ENCODE measurements at regions of chr9 and their contacts with region 1.

Region 1: DNA sequence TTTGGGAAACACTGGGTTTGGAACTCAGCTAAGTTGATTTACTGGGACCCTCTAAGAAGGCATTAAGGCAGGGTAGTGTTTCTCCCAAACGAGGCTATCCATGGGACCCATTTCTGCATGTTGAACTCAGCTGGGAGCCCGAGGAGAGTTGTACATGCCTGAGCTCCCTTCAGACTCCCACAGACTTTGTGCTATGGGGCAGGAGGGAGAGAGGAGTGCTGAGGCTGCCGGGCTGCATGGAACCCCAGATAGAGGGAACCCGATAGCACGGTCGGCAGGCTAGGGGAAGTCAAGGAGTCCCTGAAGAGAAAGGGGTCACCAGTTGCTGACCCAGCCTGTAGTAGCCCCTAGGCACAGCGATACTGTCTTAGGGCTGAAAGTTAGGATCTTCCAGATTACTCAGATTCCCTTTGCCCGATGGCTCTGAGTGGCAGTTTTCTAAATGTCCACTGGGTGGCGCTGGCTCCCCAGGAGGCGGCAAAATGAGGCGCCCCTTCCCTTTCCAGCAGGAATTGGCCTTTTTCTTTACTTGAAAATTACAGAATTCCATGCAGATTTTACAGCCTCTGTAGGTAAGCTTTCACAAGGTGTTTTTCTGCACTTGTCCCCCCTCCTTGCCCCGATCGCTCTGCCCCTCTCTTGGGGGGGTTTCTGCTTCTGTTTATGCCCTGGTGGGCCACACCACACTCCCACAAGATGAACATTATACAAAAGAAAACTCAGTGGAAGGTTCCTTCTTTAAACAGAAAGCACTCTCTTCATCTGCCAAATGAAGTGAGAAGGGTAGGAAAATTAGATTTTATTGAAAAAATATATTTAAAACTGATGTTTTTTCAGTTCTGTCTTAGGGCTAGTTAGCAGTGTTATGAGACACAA is 17.8 kb downstream of the NANS start:
- DNase-seq: peak; percentile 49 to 79
- H3K4me3 ChIP-seq: no peak overlapping the region
- H3K27ac ChIP-seq: peak overlapping the region; percentile 69
- H3K4me1 ChIP-seq: peaks cover 49% of the 10 kb centered on the region
- H3K27me3 ChIP-seq: no peaks in the 10 kb centered on the region
- CTCF ChIP-seq: peak; percentile 96

Region 2: GRCh38 chr9:97845130-97845529 is 229.2 kb before region 1 on chr9:
- CTCF ChIA-PET with region 1: no interaction called
- POLR2A ChIA-PET with region 1: no interaction called
- intact Hi-C with region 1: no loop called
- DNase-seq: no peak
- H3K4me3 ChIP-seq: no peak overlapping the region
- H3K27ac ChIP-seq: no peak overlapping the region
- H3K4me1 ChIP-seq: no peaks in the 10 kb centered on the region
- H3K27me3 ChIP-seq: no peaks in the 10 kb centered on the region
- CTCF ChIP-seq: no peak

Region 3: GRCh38 chr9:98056269-98057137 is 17.9 kb before region 1 on chr9 and contains the start of gene NANS:
- CTCF ChIA-PET with region 1: interaction called, 3 read pairs
- POLR2A ChIA-PET with region 1: interaction called, 18 read pairs
- intact Hi-C with region 1: no loop called
- DNase-seq: peak; percentile 91 to 96
- H3K4me3 ChIP-seq: peak within 1 kb of the TSS; percentile 66
- H3K27ac ChIP-seq: peak within 1 kb of the TSS; percentile 67
- H3K4me1 ChIP-seq: peaks cover 21% of the 10 kb centered on the region
- H3K27me3 ChIP-seq: no peaks in the 10 kb centered on the region
- CTCF ChIP-seq: no peak
- total RNA-seq, gene NANS: 74.6 and 84.9 TPM in 2 replicates

Region 4: DNA sequence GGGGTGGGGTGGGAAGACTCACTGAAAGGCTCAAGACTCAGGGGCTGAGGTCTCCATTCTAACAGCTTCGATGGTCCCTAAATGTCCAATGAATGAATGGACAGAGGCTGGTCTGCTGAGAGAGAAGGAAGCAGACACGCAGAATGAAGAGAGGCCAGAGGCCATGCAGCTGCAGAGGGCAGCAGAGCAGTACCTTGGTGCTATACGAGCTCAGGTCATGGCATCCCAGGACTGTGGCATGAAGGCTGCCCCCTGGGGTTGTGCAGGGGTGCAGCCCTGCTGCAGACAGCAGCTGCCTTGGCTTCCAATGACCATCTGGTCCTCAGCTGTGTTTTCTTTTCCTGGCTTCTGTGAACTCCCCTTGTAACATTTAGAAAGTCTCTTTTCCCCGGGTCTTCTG is 133.3 kb after region 1 on chr9:
- CTCF ChIA-PET with region 1: no interaction called
- POLR2A ChIA-PET with region 1: no interaction called
- intact Hi-C with region 1: loop called (anchors 1 kb)
- DNase-seq: no peak
- H3K4me3 ChIP-seq: no peak overlapping the region
- H3K27ac ChIP-seq: no peak overlapping the region
- H3K4me1 ChIP-seq: no peaks in the 10 kb centered on the region; the same call in 1 of the 2 replicates
- H3K27me3 ChIP-seq: no peaks in the 10 kb centered on the region
- CTCF ChIP-seq: no peak

Region 5: GRCh38 chr9:98707166-98708102 is 633.1 kb after region 1 on chr9:
- CTCF ChIA-PET with region 1: no interaction called
- POLR2A ChIA-PET with region 1: no interaction called
- intact Hi-C with region 1: loop called (anchors 10 kb)
- DNase-seq: peak; percentile 69 to 81
- H3K4me3 ChIP-seq: peak overlapping the region; percentile 60
- H3K27ac ChIP-seq: peak overlapping the region; percentile 46; the same call in 1 of the 2 replicates
- H3K4me1 ChIP-seq: peaks cover 6% of the 10 kb centered on the region
- H3K27me3 ChIP-seq: peaks cover 22% of the 10 kb centered on the region
- CTCF ChIP-seq: peak; percentile 70

Region 6: GRCh38 chr9:98899408-98900056 is 825.2 kb after region 1 on chr9:
- CTCF ChIA-PET with region 1: no interaction called
- POLR2A ChIA-PET with region 1: no interaction called
- intact Hi-C with region 1: no loop called
- DNase-seq: no peak
- H3K4me3 ChIP-seq: no peak overlapping the region
- H3K27ac ChIP-seq: no peak overlapping the region
- H3K4me1 ChIP-seq: no peaks in the 10 kb centered on the region
- H3K27me3 ChIP-seq: peaks cover 52% of the 10 kb centered on the region
- CTCF ChIP-seq: no peak